Activated B cell treated with CpG ODN at 0.5 μM for 24 hours (primary cell): ENCODE measurements at regions of chr17 and their contacts with region 1.

Region 1: DNA sequence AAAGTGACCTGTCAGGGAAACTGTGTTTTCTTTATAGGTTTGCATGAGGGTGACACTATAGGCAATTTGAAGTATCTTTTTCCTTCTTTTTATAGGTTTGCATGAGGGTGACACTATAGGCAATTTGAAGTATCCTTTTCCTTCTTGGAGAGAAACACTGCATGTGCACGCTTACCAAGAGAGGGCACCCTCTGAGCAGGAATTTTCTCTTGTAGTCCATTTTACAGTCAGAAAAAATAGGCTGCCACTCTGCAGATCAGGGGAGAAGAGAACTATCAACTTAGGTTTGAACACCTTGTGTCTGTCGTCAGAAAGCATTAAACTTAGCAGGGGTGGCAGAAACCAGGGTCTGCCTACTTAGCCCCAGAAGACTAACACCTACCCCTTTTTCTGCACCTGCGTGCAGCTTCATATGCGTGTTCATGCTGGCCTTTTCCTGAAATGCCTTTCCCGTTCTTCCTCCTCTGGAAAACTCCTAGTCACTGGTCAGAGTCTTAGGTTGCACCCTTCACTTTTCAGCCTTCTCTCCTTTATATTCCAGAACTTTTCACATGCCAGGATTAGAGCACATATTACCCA is 16.4 kb upstream of the SMIM36 start:
- DNase-seq: no peak
- ATAC-seq: no peak
- H3K4me3 Mint-ChIP-seq: no peak overlapping the region
- H3K27ac Mint-ChIP-seq: no peak overlapping the region
- H3K4me1 Mint-ChIP-seq: peaks cover 11% of the 10 kb centered on the region
- H3K27me3 Mint-ChIP-seq: no peaks in the 10 kb centered on the region
- CTCF ChIP-seq: no peak

Region 2: GRCh38 chr17:55576996-55577586 is 49.5 kb after region 1 on chr17:
- CTCF ChIA-PET with region 1: interaction called, 15 read pairs
- POLR2A ChIA-PET with region 1: interaction called, 4 read pairs
- intact Hi-C with region 1: loop called (anchors 2 kb)
- DNase-seq: peak; percentile 28
- ATAC-seq: peak; percentile 78
- H3K4me3 Mint-ChIP-seq: no peak overlapping the region
- H3K27ac Mint-ChIP-seq: no peak overlapping the region
- H3K4me1 Mint-ChIP-seq: peaks cover 23% of the 10 kb centered on the region
- H3K27me3 Mint-ChIP-seq: no peaks in the 10 kb centered on the region
- CTCF ChIP-seq: no peak

Region 3: DNA sequence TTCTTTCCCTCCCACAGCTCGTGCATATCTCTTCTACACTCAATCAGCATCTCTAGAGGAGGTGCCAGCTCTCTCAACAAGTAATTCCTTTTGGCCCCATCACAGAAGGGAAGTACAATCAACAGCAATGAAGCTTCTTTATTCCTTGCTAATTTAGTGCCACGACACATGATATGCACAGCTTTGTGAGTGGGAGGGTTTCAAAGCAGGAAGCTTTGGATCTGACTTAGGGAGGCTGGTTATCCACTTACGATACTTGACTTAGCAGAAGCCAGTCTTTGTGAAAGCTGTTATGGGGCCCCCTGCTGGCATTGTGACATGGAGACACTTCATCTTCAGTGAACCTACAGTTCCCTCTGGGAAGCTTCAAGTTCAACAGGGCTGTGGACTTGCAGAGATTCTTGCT is 114.0 kb after region 1 on chr17:
- CTCF ChIA-PET with region 1: interaction called, 20 read pairs
- POLR2A ChIA-PET with region 1: no interaction called
- intact Hi-C with region 1: loop called (anchors 1 kb)
- DNase-seq: no peak
- ATAC-seq: no peak
- H3K4me3 Mint-ChIP-seq: no peak overlapping the region
- H3K27ac Mint-ChIP-seq: no peak overlapping the region
- H3K4me1 Mint-ChIP-seq: peaks cover 3% of the 10 kb centered on the region
- H3K27me3 Mint-ChIP-seq: peaks cover 2% of the 10 kb centered on the region
- CTCF ChIP-seq: no peak

Region 4: DNA sequence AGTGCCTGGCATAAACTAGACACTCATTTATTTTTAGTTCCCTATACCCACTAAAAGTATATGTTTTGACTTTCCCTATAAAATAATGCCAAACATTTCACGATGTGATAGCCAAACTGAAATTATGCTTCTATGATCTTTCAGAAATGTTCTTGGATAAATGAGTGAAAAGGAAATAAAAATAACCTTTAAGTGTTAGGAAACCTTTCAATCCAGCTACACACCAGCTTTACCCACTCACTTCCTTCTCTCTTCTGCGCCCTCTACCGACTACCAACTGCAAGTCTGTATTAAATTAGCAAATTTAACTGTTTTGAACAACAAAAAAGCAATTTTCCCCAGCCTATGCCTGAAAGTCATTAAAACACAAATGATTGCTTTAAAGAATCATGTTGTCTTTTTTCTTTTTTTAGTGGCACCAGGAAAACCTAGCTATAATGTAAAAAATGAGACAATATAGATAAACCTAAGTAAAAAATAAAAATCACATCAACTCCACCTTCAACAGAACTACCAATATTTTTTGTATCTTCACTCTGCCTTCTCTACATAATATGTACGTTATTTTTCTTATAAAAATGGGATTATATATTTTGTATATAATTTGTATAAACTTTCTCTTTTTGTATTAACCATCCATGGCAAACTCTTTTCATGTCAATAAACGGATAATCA is 208.2 kb after region 1 on chr17:
- CTCF ChIA-PET with region 1: interaction called, 12 read pairs
- POLR2A ChIA-PET with region 1: no interaction called
- intact Hi-C with region 1: loop called (anchors 1 kb)
- DNase-seq: no peak
- ATAC-seq: no peak
- H3K4me3 Mint-ChIP-seq: no peak overlapping the region
- H3K27ac Mint-ChIP-seq: no peak overlapping the region
- H3K4me1 Mint-ChIP-seq: peaks cover 10% of the 10 kb centered on the region
- H3K27me3 Mint-ChIP-seq: peaks cover 14% of the 10 kb centered on the region
- CTCF ChIP-seq: peak; percentile 78

Region 5: GRCh38 chr17:55825213-55825612 is 297.6 kb after region 1 on chr17:
- CTCF ChIA-PET with region 1: no interaction called
- POLR2A ChIA-PET with region 1: no interaction called
- intact Hi-C with region 1: loop called (anchors 1 kb)
- DNase-seq: no peak
- ATAC-seq: no peak
- H3K4me3 Mint-ChIP-seq: no peak overlapping the region
- H3K27ac Mint-ChIP-seq: no peak overlapping the region
- H3K4me1 Mint-ChIP-seq: no peaks in the 10 kb centered on the region
- H3K27me3 Mint-ChIP-seq: peaks cover 3% of the 10 kb centered on the region
- CTCF ChIP-seq: no peak

Region 6: DNA sequence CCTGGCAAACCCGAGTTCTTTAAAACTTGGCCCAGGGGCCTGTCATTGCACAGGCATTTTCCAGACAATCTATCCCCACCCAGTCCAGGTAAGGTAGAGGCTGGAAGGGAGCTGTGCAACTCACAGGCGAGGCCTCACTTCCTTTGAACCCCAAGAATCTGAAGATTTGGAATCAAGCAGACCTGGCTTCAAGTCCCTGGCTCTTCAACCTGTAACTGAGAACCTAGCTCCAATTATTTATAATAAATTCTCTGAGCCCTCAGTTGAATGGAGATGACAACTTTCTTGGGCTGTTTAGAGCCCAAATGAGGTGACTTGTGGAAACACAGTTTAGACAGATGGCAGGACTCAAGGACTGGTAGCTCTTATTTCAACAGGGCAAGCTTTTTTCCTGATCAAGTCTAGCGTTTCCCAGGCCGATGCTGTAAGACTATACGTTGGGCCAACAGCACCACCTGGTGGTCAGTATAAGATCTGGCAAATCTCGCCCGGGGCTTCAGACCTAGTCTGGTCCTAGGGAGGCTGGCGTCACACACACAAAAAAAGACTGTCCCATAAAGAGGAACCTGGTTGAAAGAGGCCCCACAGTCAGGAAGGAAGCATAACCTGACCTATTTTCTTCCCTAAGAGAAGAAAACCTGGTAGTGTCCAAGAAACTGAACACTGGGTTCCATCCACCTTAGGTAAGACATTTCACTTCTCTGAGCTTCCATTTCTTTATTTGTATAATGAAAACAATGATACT is 1188.2 kb after region 1 on chr17:
- CTCF ChIA-PET with region 1: interaction called, 6 read pairs
- POLR2A ChIA-PET with region 1: no interaction called
- intact Hi-C with region 1: loop called (anchors 2 kb)
- DNase-seq: peak; percentile 38
- ATAC-seq: peak; percentile 87
- H3K4me3 Mint-ChIP-seq: no peak overlapping the region
- H3K27ac Mint-ChIP-seq: no peak overlapping the region
- H3K4me1 Mint-ChIP-seq: peaks cover 3% of the 10 kb centered on the region
- H3K27me3 Mint-ChIP-seq: no peaks in the 10 kb centered on the region
- CTCF ChIP-seq: peak; percentile 56